PC-9 (cell line): ENCODE measurements at regions of chr12 and their contacts with region 1.

Region 1: DNA sequence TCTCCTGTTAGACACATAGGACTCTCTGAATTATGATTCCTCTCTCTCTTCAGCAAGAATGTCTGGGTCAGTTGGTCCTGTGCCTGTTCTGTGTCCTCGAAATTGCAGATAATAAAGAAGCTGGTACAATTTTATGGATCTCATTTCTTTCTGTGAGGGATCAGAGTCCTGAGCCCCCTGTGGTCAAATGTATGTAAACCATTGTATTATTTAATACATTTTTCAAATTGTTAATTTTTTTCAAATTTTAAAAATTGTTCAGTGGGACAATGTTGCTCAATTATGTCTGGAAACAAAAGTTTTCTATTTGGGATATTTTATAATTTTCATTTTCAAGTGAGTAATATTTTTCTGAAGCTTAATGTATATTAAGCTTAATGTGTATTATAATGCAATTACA is 513.5 kb downstream of the CCER1 start:
- DNase-seq: no peak
- H3K4me3 ChIP-seq: no peak overlapping the region
- H3K27ac ChIP-seq: no peak overlapping the region
- H3K4me1 ChIP-seq: no peaks in the 10 kb centered on the region
- H3K27me3 ChIP-seq: no peaks in the 10 kb centered on the region
- CTCF ChIP-seq: peak; percentile 28; the same call in 1 of the 2 replicates

Region 2: DNA sequence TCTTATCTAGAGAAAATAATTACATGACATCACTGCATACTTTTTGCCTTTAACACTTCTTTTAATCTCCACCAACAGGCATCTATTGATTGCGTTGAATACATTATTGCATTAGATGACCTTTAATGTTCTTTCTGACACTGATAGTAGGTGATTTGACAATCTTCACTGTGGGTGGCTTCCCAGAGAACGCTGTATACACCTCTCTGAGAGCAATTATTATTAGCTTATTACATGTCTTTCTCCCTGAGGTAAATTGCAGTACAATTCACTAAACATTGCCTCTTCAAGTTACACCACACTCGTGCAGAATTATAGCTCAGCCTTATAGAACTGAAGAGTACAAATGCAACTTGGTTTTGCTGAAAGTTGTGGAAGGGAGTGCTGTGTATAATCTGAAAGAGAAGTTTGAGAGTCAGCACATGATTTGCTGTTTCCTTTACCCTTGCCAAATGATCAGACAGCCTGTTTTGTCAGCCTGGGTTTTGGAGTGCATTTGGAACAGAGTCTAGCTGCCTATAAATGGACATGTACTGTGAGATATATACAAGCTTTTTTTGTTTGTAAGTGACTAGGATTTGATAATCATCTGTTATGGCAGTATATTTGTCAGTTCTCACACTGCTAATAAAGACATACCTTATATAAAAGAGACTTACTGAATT is 144.3 kb after region 1 on chr12:
- CTCF ChIA-PET with region 1: no interaction called
- POLR2A ChIA-PET with region 1: interaction called, 15 read pairs
- intact Hi-C with region 1: no loop called
- DNase-seq: no peak
- H3K4me3 ChIP-seq: no peak overlapping the region
- H3K27ac ChIP-seq: no peak overlapping the region
- H3K4me1 ChIP-seq: no peaks in the 10 kb centered on the region
- H3K27me3 ChIP-seq: no peaks in the 10 kb centered on the region
- CTCF ChIP-seq: no peak